Aorta (tissue), 5 donors: ENCODE measurements at regions of chr12 and their contacts with region 1.

Region 1: DNA sequence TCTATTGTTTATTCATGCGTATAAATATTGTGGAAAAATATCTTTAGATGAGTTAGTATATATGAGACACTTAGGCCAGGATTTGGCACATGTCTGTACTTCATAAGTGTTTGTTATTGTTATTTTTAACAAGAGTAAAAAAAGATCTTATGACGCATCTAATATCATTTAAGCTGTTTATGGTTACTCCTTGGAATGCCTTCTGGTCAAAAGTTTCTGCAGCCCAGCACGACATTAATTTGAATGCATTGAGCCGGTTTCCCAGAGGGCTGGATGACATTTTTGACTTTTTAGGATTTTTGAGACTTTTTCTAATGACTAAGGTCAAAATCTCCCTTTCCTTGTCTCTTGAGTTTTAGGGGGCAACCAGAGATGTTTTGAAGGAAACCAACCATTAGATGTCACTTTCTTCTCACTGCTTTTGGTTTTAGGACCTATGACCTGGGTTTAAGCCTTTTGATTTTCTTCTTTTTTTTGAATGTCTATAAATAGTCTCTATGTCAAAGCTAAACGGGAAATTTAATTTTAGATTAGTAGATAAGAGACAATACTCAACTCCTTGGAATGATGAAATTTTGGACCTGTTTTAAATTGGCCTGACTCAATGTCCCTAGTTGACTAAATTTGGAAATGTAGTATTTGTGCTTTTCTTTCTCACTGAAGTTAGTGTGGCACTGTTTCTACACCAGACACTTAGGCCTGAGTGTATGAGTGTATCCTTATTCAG is 215.5 kb downstream of the AEBP2 start:
- DNase-seq: no peak
- ATAC-seq: peak; percentile 90
- H3K4me3 ChIP-seq: no peak overlapping the region
- H3K27ac ChIP-seq: no peak overlapping the region
- H3K4me1 ChIP-seq: no peaks in the 10 kb centered on the region
- H3K27me3 ChIP-seq: no peaks in the 10 kb centered on the region

Region 2: DNA sequence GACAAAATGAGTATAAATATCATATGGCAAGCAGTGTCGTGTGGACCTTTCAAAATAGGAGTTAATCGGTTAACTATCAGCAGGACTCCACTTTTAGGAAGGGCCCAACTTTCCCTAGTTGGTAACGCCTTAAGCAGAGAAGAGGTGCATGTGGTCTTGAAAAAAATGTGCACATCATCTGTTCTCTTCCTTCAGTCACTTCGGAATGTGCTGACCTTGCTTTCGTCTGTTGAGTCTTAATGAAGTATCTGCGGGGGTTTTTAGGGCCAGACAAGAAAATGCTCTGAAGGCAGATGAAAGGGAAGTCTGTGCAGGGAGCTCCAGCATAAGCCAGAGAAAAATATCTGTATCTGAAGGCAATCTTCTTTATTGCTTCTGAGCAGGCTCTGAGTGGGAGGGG is 30.3 kb before region 1 on chr12:
- intact Hi-C with region 1: no loop called
- DNase-seq: no peak
- ATAC-seq: no peak
- H3K4me3 ChIP-seq: no peak overlapping the region
- H3K27ac ChIP-seq: no peak overlapping the region
- H3K4me1 ChIP-seq: no peaks in the 10 kb centered on the region
- H3K27me3 ChIP-seq: no peaks in the 10 kb centered on the region

Region 3: GRCh38 chr12:19712041-19712440 is 57.2 kb after region 1 on chr12:
- intact Hi-C with region 1: loop called (anchors 2 to 5 kb)
- DNase-seq: no peak
- ATAC-seq: peak; percentile 74
- H3K4me3 ChIP-seq: no peak overlapping the region
- H3K27ac ChIP-seq: peak overlapping the region; percentile 36 to 95
- H3K4me1 ChIP-seq: peaks cover 0 to 5% of the 10 kb centered on the region in 2 donors
- H3K27me3 ChIP-seq: no peaks in the 10 kb centered on the region

Region 4: DNA sequence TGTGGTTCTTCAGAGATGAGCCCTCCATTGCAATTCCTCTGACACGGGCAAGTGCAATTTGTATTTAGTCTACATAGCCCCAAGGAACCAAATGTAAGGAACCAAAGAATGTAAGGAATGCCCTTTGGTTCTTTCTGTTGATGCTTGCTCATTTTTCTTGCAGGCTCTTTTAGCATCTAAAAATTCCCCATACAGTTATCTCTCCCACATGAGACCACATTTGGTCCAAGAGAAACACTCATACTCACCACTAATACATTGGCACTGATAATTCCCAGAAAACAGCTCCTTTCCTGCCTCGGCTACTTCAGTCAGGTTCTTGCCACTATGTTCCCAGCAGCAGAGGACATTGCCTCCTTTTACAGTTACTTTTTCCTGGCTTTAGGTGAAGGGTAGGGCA is 117.0 kb after region 1 on chr12:
- intact Hi-C with region 1: loop called in 1 of 2 experiments (anchors 5 kb)
- DNase-seq: peak in 1 of 2 donors; percentile 55
- ATAC-seq: peak; percentile 54
- H3K4me3 ChIP-seq: no peak overlapping the region
- H3K27ac ChIP-seq: peak overlapping the region; percentile 82 to 88
- H3K4me1 ChIP-seq: peaks cover 0 to 5% of the 10 kb centered on the region in 2 donors
- H3K27me3 ChIP-seq: no peaks in the 10 kb centered on the region

Region 5: DNA sequence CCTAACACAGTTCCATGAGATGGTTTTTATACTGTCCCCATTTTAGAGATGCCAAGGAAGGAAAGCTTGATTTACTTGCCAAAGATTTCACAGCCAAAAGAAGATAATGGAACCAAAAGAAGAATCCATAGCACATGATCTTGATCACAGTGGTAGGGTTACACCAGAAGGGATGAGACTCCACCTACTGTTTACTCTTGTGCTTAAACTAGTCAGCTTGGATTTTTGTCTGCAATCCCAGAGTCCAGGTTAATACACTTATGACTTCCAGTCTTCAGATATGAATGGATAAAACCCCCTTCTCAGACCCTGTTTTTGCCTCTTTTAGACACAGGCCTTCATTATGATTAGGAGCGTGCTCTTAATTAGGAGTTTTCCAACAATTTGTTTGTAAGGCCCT is 238.7 kb after region 1 on chr12:
- intact Hi-C with region 1: loop called in 1 of 2 experiments (anchors 5 kb)
- DNase-seq: no peak
- ATAC-seq: no peak
- H3K4me3 ChIP-seq: no peak overlapping the region
- H3K27ac ChIP-seq: peak overlapping the region in 1 of 2 donors; percentile 67
- H3K4me1 ChIP-seq: peaks cover 0 to 5% of the 10 kb centered on the region in 2 donors
- H3K27me3 ChIP-seq: no peaks in the 10 kb centered on the region

Region 6: DNA sequence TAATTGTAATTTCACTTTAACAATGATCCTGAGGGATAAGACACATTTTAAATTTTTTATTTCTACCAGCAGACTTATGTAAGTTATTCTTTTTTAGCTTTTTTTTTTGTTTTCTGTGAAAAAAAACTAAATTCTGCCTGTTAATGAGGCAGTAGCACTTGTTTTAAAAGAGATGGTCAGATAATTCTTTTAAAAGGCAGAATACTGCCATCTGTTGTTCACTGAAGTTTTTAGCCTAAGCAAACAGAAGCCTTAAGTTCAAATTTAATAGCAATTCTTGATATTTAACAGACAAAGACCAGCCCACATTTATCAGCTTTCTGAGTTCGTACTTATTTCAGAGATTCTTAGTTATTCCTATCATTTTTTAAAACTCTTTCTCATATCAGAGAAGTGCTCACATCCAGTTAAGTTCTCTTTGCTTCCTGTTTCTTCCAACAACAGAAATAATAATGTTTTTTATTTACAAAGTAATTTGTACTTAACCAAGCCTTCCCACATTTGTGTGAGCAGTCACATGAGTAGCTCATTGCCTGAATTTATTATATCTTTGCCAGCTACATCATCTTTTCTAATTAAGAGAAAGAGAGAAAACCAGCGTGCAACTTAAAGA is 947.0 kb after region 1 on chr12:
- intact Hi-C with region 1: loop called in 1 of 2 experiments (anchors 10 kb)
- DNase-seq: no peak
- ATAC-seq: no peak
- H3K4me3 ChIP-seq: no peak overlapping the region
- H3K27ac ChIP-seq: no peak overlapping the region
- H3K4me1 ChIP-seq: peaks cover 0 to 7% of the 10 kb centered on the region in 2 donors
- H3K27me3 ChIP-seq: no peaks in the 10 kb centered on the region